ENCODE measurements at regions of chr10 and their contacts with region 1.

Region 1: GRCh38 chr10:18104223-18104872 is 35.9 kb upstream of the CACNB2 start:
- DNase-seq: no peak
- H3K4me3 ChIP-seq: no peak overlapping the region
- H3K27ac ChIP-seq: no peak overlapping the region
- H3K27me3 ChIP-seq: peaks cover 6% of the 10 kb centered on the region
- CTCF ChIP-seq: peak; percentile 75

Region 2: DNA sequence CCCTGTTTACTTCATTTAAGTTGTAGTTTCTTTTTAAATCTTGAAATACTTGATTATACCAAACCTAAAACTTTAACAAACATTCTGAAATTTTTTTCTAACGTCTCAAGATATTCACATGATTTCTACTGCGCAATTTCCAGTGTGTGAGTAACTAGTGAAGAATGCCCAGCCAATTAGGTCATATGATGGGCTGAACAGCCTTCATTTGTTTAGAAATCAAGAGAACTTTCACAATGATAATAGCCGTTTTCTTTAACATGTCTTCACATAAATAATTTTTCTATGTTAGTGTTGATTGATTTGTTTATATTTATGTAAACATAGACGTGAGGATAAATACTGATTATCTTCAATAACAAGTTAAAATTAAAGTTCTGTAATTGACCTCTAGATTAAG is 438.6 kb before region 1 on chr10:
- CTCF ChIA-PET with region 1: no interaction called
- POLR2A ChIA-PET with region 1: interaction called, 10 read pairs
- DNase-seq: peak; percentile 78
- H3K4me3 ChIP-seq: no peak overlapping the region
- H3K27ac ChIP-seq: no peak overlapping the region
- H3K27me3 ChIP-seq: no peaks in the 10 kb centered on the region
- CTCF ChIP-seq: no peak

Region 3: GRCh38 chr10:17847585-17848296 is 256.6 kb before region 1 on chr10:
- CTCF ChIA-PET with region 1: interaction called, 18 read pairs
- POLR2A ChIA-PET with region 1: no interaction called
- DNase-seq: no peak
- H3K4me3 ChIP-seq: no peak overlapping the region
- H3K27ac ChIP-seq: no peak overlapping the region
- H3K27me3 ChIP-seq: peaks cover 2% of the 10 kb centered on the region
- CTCF ChIP-seq: peak; percentile 63

Region 4: GRCh38 chr10:18136073-18136791 is 31.9 kb after region 1 on chr10:
- CTCF ChIA-PET with region 1: interaction called, 11 read pairs
- POLR2A ChIA-PET with region 1: no interaction called
- DNase-seq: no peak
- H3K4me3 ChIP-seq: no peak overlapping the region
- H3K27ac ChIP-seq: no peak overlapping the region
- H3K27me3 ChIP-seq: peaks cover 15% of the 10 kb centered on the region
- CTCF ChIP-seq: no peak

Measured in AG04450 (cell line).